Heart left ventricle (tissue), 16 donors: ENCODE measurements at regions of chr19 and their contacts with region 1.

Region 1: GRCh38 chr19:49546825-49547565 is 19.2 kb downstream of the RCN3 start:
- DNase-seq: peak in 4 of 5 donors; percentile 59 to 79 (median 70)
- ATAC-seq: peak; percentile 74 to 89 (median 80)
- H3K4me3 ChIP-seq: no peak overlapping the region
- H3K27ac ChIP-seq: peak overlapping the region in 1 of 12 donors; percentile 37
- H3K4me1 ChIP-seq: peaks cover 0 to 19% (median 0%) of the 10 kb centered on the region in 12 donors
- H3K27me3 ChIP-seq: no peaks in the 10 kb centered on the region
- CTCF ChIP-seq: peak; percentile 72 to 89 (median 85)
- POLR2A ChIP-seq: no peak

Region 2: GRCh38 chr19:49473868-49474544 is 73.0 kb before region 1 on chr19 and contains the start of gene FLT3LG:
- intact Hi-C with region 1: loop called in 1 of 10 experiments (anchors 1 kb)
- DNase-seq: peak; percentile 74 to 90 (median 83)
- ATAC-seq: peak; percentile 44 to 79 (median 65)
- H3K4me3 ChIP-seq: peak within 1 kb of the TSS; percentile 33 to 93 (median 68)
- H3K27ac ChIP-seq: peak within 1 kb of the TSS; percentile 76 to 96 (median 90)
- H3K4me1 ChIP-seq: peaks cover 0 to 57% (median 13%) of the 10 kb centered on the region in 12 donors
- H3K27me3 ChIP-seq: peaks cover 0 to 6% (median 0%) of the 10 kb centered on the region in 9 donors
- CTCF ChIP-seq: peak; percentile 96 to 100 (median 99)
- POLR2A ChIP-seq: peak in 1 of 2 donors; percentile 41
- total RNA-seq, gene FLT3LG: 1.7 to 13.4 (median 2.4) TPM

Region 3: DNA sequence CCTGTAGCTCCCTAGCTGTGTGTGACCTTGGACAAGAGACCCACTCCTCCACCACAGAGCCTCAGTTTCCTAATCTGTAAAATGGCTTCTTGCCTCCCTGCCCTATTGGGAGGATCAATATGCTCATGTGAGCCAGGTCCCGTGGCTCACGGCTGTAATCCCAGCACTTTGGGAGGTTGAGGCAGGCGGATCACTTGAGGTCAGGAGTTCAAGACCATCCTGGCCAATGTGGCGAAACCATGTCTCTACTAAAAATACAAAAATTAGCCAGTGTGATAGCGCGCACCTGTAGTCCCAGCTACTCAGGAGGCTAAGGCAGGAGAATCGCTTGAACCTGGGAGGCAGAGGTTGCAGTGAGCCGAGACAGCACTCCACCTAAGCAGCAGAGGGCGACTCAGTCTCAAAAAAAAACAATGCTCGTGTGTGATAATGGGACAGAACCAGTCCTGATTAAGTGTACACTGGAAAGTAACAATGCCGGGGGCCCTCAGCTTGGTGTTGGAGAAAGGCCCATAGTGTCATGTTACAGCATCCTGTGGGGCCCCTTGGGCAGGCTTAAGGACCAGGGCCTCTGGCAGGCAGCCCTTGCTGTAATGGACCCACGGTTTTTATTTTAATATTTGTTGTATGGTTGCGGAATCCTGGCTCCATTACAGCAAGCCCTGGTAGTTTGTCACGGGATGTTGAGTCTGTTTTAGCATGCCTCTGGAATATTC is 44.0 kb before region 1 on chr19:
- intact Hi-C with region 1: loop called (anchors 1 to 2 kb)
- DNase-seq: peak in 1 of 5 donors; percentile 49
- ATAC-seq: peak; percentile 16 to 61 (median 54)
- H3K4me3 ChIP-seq: no peak overlapping the region
- H3K27ac ChIP-seq: peak overlapping the region in 1 of 12 donors; percentile 48
- H3K4me1 ChIP-seq: peaks cover 5 to 51% (median 26%) of the 10 kb centered on the region in 12 donors
- H3K27me3 ChIP-seq: no peaks in the 10 kb centered on the region
- CTCF ChIP-seq: peak; percentile 47 to 81 (median 65)
- POLR2A ChIP-seq: no peak

Region 4: GRCh38 chr19:49570138-49570856 is 23.3 kb after region 1 on chr19:
- intact Hi-C with region 1: loop called in 2 of 10 experiments (anchors 1 to 2 kb)
- DNase-seq: peak in 3 of 5 donors; percentile 42 to 59 (median 51)
- ATAC-seq: peak; percentile 75 to 81 (median 76)
- H3K4me3 ChIP-seq: peak overlapping the region in 1 of 12 donors; percentile 9
- H3K27ac ChIP-seq: peak overlapping the region; percentile 36 to 84 (median 68)
- H3K4me1 ChIP-seq: peaks cover 4 to 52% (median 20%) of the 10 kb centered on the region in 12 donors
- H3K27me3 ChIP-seq: no peaks in the 10 kb centered on the region
- CTCF ChIP-seq: peak; percentile 97 to 100 (median 98)
- POLR2A ChIP-seq: no peak